ENCODE measurements at regions of chr3 and their contacts with region 1.

Region 1: GRCh38 chr3:58491506-58492402 is at the start of gene KCTD6:
- DNase-seq: peak; percentile 97
- H3K4me3 Mint-ChIP-seq: peak within 1 kb of the TSS; percentile 91
- H3K27ac Mint-ChIP-seq: peak within 1 kb of the TSS; percentile 86
- H3K4me1 Mint-ChIP-seq: peaks cover 24% of the 10 kb centered on the region
- H3K27me3 Mint-ChIP-seq: peaks cover 44% of the 10 kb centered on the region
- total RNA-seq, gene KCTD6: 5.8 and 6.3 TPM in 2 replicates

Region 2: GRCh38 chr3:58167431-58168351 is 324.1 kb before region 1 on chr3:
- intact Hi-C with region 1: no loop called
- DNase-seq: peak; percentile 90
- H3K4me3 Mint-ChIP-seq: no peak overlapping the region
- H3K27ac Mint-ChIP-seq: no peak overlapping the region
- H3K4me1 Mint-ChIP-seq: no peaks in the 10 kb centered on the region
- H3K27me3 Mint-ChIP-seq: no peaks in the 10 kb centered on the region

Region 3: DNA sequence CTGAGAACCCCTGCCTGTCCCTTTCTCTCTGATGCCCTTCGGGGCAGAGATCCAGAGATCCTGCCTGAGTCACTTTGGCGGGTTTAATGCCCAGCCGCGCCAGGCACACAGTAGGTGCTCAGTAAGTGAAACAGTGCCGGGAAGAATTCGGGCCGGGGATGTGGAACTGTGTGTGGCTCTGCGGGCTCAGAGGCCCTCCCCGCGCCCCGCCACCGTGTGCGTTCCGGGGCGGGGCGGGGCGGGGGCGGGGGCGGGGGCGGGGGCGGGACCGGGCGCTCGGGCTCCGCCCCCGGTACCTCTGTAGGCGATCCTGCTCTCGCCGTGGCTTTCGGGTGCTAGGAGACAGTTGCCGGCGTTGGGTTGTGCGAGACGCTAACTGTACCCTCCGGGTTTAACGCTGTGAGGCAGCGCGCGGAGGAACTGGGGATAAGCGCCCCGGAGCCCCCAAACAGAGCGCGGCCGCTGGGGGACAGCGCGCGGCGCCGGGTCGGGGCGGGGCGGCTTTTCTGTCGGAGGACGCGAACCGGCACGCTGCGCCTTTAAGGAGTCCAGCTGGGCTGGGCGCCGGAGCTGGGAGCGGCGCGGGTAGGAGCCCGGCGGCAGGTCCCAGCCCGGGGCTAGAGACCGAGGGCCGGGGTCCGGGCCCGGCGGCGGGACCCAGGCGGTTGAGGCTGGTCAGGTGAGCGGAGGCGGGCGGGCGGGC is 254.4 kb before region 1 on chr3 and contains the start of gene ABHD6:
- intact Hi-C with region 1: no loop called
- DNase-seq: peak; percentile 95
- H3K4me3 Mint-ChIP-seq: peak within 1 kb of the TSS; percentile 94
- H3K27ac Mint-ChIP-seq: peak within 1 kb of the TSS; percentile 83
- H3K4me1 Mint-ChIP-seq: peaks cover 15% of the 10 kb centered on the region
- H3K27me3 Mint-ChIP-seq: peaks cover 27% of the 10 kb centered on the region
- total RNA-seq, gene ABHD6: 9.8 and 10.8 TPM in 2 replicates

Region 4: DNA sequence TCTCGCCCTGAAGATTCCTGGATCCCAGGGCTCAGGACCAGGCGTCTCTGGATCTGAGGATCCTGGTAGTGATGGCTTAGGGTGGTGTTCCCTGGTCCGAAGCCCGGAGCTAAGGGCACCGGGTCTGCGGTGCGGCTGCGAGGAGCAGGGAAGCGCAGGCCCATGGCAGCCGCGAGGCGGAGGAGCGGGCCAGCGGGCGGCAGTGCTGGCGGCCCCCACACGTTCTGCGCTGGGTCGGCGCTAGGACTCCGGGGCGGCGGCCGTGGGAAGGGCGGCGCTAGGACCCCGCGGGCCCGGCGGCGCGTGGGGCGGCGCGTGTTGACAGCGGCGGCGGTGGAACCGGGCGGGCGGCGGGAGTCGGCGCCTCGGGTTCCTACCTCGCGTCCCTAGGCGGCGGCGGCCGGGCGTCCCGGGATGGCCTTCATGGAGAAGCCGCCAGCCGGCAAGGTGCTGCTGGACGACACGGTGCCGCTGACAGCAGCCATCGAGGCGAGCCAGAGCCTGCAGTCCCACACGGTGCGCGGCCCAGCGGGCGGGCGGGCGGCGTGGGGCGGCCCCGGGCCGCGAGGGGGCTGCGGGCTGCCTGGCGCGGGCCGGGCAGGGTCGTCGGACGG is 159.1 kb before region 1 on chr3 and contains the start of gene PXK:
- intact Hi-C with region 1: loop called (anchors 2 kb)
- DNase-seq: peak; percentile 96
- H3K4me3 Mint-ChIP-seq: peak within 1 kb of the TSS; percentile 99
- H3K27ac Mint-ChIP-seq: peak within 1 kb of the TSS; percentile 99
- H3K4me1 Mint-ChIP-seq: peaks cover 39% of the 10 kb centered on the region
- H3K27me3 Mint-ChIP-seq: no peaks in the 10 kb centered on the region
- total RNA-seq, gene PXK: 41.1 and 45.7 TPM in 2 replicates

Region 5: DNA sequence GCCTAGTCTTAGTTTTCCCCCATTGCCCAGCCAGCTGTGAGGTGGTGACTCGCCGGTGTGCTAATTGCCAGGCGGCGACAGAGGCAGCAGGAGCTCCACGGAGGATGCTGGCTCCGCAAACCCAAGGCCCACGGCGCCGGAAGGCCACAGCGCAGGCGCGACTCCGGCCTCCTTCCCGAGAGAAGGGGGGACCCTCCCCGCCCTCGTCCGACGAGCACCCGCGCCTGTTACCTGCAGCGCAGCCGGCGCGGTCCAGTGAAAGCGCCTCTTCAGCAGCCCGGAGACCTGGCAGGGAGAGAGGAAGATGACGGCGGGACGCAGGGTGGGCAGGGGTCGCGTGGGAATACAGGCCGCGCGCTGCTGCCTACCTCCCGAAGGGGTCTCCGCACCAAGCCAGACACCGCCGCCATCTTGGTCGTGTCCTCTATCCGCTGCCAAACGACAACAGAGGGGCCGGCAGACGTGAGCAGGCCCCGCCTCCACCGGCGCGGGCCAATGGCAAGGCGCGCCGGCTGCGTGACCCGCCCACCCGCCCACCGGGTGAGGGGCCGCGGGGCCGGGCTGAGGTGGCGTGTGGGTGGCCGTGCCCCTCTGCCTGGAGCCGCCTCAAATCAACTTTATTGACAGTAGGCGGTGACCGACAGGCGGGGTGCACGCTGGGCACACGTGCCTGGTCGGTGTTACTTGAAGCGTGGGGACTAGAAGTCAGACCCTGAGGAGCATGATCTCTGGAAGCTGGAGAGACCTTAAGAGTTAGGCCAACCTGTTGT is 58.2 kb before region 1 on chr3 and contains the start of gene PDHB:
- intact Hi-C with region 1: loop called (anchors 2 kb)
- DNase-seq: peak; percentile 97
- H3K4me3 Mint-ChIP-seq: peak within 1 kb of the TSS; percentile 92
- H3K27ac Mint-ChIP-seq: peak within 1 kb of the TSS; percentile 93
- H3K4me1 Mint-ChIP-seq: peaks cover 18% of the 10 kb centered on the region
- H3K27me3 Mint-ChIP-seq: peaks cover 11% of the 10 kb centered on the region
- total RNA-seq, gene PDHB: 68.0 and 69.3 TPM in 2 replicates

Region 6: DNA sequence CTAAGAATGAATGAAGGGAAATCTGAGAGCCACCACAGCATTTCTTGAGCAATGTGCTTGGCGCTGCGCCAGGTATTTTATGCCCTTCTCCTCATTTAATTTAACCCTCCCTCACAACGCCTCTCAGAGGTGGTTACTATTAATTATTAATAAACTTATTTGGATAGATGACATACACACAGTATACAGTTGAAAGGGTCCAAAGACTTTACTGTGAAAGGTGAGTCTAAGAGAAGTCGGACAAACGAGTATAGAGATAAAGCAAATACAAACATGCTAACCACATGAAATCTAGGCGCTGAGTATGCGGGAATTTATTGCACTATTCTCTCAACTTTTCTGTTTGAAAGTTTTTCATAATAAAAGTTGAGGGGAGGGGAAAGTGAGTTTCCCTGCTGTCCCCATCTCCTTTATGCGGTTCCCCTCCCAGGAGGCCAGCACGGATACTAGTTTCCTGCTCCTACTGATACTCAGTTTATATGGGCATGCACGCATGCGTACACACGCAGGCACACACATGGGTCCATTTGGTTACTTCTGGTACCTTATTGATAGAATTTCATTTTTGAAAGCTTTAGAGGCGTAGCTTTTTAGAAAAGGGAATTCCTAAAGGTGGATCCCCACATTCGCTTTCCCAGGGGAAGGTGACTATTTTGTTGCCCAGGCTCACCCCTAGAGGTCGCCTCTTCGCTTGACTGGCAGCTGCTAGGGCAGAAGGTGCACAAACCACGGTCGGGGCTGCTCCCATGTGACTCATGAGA is 28.4 kb before region 1 on chr3:
- intact Hi-C with region 1: loop called (anchors 1 kb)
- DNase-seq: peak; percentile 90
- H3K4me3 Mint-ChIP-seq: no peak overlapping the region
- H3K27ac Mint-ChIP-seq: peak overlapping the region; percentile 65
- H3K4me1 Mint-ChIP-seq: peaks cover 11% of the 10 kb centered on the region
- H3K27me3 Mint-ChIP-seq: peaks cover 6% of the 10 kb centered on the region

Region 7: GRCh38 chr3:58471025-58471887 is 20.5 kb before region 1 on chr3:
- intact Hi-C with region 1: loop called (anchors 1 kb)
- DNase-seq: peak; percentile 88
- H3K4me3 Mint-ChIP-seq: peak overlapping the region; percentile 46
- H3K27ac Mint-ChIP-seq: peak overlapping the region; percentile 62
- H3K4me1 Mint-ChIP-seq: peaks cover 45% of the 10 kb centered on the region
- H3K27me3 Mint-ChIP-seq: peaks cover 2% of the 10 kb centered on the region

Region 8: DNA sequence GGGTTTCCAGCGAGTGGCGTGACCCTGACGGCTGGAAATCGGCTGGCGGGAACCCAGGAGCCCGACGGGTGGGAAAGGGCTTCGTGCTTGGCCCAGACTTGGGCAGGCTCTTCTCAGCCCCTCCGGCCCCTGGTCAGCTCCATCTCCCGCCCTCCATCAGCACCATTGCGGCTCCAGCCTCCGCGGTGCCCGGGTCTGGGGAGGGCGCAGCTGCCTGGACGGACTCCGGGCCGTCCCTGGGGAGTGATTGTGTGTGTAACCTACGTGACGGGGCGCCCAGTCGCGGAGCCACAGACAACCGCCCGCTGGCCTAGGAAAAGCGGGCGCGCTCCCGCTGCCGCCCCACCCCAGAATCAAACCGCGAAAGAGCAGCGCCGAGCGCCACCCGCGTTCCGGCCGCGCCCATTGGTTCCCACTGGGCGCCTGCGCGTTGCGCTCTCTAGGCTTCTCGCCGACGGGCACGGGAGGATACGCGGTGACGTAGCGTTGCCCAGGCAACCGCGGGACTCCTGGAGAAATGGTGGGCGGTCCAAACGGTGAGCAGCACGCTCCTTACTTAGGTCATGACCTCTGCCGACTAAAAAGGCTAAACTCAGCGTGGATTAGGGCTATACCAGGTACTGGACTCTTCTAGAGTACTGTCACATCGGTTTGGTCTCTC is 558.0 kb after region 1 on chr3 and contains the start of gene CFAP20DC:
- intact Hi-C with region 1: loop called (anchors 5 kb)
- DNase-seq: peak; percentile 98
- H3K4me3 Mint-ChIP-seq: peak within 1 kb of the TSS; percentile 77
- H3K27ac Mint-ChIP-seq: peak within 1 kb of the TSS; percentile 80
- H3K4me1 Mint-ChIP-seq: peaks cover 9% of the 10 kb centered on the region
- H3K27me3 Mint-ChIP-seq: peaks cover 6% of the 10 kb centered on the region
- total RNA-seq, gene CFAP20DC: 0.98 and 1.3 TPM in 2 replicates

Measured in activated CD4-positive, alpha-beta T cell treated with anti-CD3 and anti-CD28 coated beads, Interleukin-2, amount 10 ng/mL, durations not matched to agents 24 days and 14 days (primary cell).